Natural killer cell (primary cell): ENCODE measurements at regions of chr15 and their contacts with region 1.

Region 1: GRCh38 chr15:34337557-34338306 is at the start of gene SLC12A6:
- DNase-seq: peak; percentile 91 to 95
- ATAC-seq: peak; percentile 84 to 94 (median 91)
- H3K4me3 ChIP-seq: peak within 1 kb of the TSS; percentile 79
- H3K4me3 Mint-ChIP-seq: peak within 1 kb of the TSS; percentile 97
- H3K27ac ChIP-seq: peak within 1 kb of the TSS; percentile 76
- H3K27ac Mint-ChIP-seq: peak within 1 kb of the TSS; percentile 92 to 95
- H3K4me1 ChIP-seq: peaks cover 41% of the 10 kb centered on the region
- H3K4me1 Mint-ChIP-seq: peaks cover 47 to 52% of the 10 kb centered on the region in 2 donors
- H3K27me3 ChIP-seq: no peaks in the 10 kb centered on the region
- H3K27me3 Mint-ChIP-seq: no peaks in the 10 kb centered on the region
- CTCF ChIP-seq: no peak
- total RNA-seq, gene SLC12A6: 56.1 to 82.9 (median 79.5) TPM

Region 2: GRCh38 chr15:34223904-34224596 is 113.7 kb before region 1 on chr15:
- intact Hi-C with region 1: loop called (anchors 2 kb)
- DNase-seq: peak in 1 of 2 donors; percentile 31
- ATAC-seq: no peak
- H3K4me3 ChIP-seq: peak overlapping the region; percentile 67
- H3K4me3 Mint-ChIP-seq: peak overlapping the region; percentile 95
- H3K27ac ChIP-seq: peak overlapping the region; percentile 83
- H3K27ac Mint-ChIP-seq: peak overlapping the region; percentile 98 to 99
- H3K4me1 ChIP-seq: peaks cover 15% of the 10 kb centered on the region
- H3K4me1 Mint-ChIP-seq: peaks cover 23 to 29% of the 10 kb centered on the region in 2 donors
- H3K27me3 ChIP-seq: no peaks in the 10 kb centered on the region
- H3K27me3 Mint-ChIP-seq: no peaks in the 10 kb centered on the region
- CTCF ChIP-seq: no peak